ENCODE measurements at regions of chr20 and their contacts with region 1.

Region 1: GRCh38 chr20:34312544-34313217 is 9.5 kb upstream of the AHCY start:
- DNase-seq: peak; percentile 80
- H3K4me3 Mint-ChIP-seq: no peak overlapping the region
- H3K27ac Mint-ChIP-seq: no peak overlapping the region
- H3K4me1 Mint-ChIP-seq: no peaks in the 10 kb centered on the region
- H3K27me3 Mint-ChIP-seq: peaks cover 27% of the 10 kb centered on the region

Region 2: DNA sequence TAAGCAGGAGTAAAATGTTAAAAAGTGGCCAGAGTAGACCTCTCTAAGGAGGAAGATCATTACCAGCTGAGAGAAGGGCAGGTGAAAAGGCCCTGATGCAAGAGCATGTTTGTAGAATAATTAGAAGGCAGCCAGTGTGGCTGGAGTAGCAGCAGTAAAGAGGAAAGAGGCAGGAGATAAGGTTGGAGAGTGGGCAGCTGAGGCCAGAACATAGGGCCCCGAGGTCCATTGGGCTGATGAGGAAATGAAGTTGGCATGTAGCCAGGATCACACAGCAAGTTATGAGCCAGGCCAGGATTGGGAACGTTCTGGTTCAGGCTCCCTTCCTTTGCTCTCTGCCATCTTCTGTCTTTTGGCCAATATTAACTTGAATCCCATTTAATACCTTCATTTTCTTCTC is 267.4 kb before region 1 on chr20:
- intact Hi-C with region 1: no loop called
- DNase-seq: no peak
- H3K4me3 Mint-ChIP-seq: no peak overlapping the region
- H3K27ac Mint-ChIP-seq: no peak overlapping the region
- H3K4me1 Mint-ChIP-seq: peaks cover 22% of the 10 kb centered on the region
- H3K27me3 Mint-ChIP-seq: no peaks in the 10 kb centered on the region

Region 3: GRCh38 chr20:34415079-34415478 is 102.4 kb after region 1 on chr20:
- intact Hi-C with region 1: loop called (anchors 2 kb)
- DNase-seq: no peak
- H3K4me3 Mint-ChIP-seq: no peak overlapping the region
- H3K27ac Mint-ChIP-seq: peak overlapping the region; percentile 74
- H3K4me1 Mint-ChIP-seq: peaks cover 20% of the 10 kb centered on the region
- H3K27me3 Mint-ChIP-seq: no peaks in the 10 kb centered on the region

Region 4: GRCh38 chr20:34475979-34476736 is 163.5 kb after region 1 on chr20:
- intact Hi-C with region 1: loop called (anchors 1 kb)
- DNase-seq: no peak
- H3K4me3 Mint-ChIP-seq: no peak overlapping the region
- H3K27ac Mint-ChIP-seq: no peak overlapping the region
- H3K4me1 Mint-ChIP-seq: peaks cover 7% of the 10 kb centered on the region
- H3K27me3 Mint-ChIP-seq: no peaks in the 10 kb centered on the region

Region 5: DNA sequence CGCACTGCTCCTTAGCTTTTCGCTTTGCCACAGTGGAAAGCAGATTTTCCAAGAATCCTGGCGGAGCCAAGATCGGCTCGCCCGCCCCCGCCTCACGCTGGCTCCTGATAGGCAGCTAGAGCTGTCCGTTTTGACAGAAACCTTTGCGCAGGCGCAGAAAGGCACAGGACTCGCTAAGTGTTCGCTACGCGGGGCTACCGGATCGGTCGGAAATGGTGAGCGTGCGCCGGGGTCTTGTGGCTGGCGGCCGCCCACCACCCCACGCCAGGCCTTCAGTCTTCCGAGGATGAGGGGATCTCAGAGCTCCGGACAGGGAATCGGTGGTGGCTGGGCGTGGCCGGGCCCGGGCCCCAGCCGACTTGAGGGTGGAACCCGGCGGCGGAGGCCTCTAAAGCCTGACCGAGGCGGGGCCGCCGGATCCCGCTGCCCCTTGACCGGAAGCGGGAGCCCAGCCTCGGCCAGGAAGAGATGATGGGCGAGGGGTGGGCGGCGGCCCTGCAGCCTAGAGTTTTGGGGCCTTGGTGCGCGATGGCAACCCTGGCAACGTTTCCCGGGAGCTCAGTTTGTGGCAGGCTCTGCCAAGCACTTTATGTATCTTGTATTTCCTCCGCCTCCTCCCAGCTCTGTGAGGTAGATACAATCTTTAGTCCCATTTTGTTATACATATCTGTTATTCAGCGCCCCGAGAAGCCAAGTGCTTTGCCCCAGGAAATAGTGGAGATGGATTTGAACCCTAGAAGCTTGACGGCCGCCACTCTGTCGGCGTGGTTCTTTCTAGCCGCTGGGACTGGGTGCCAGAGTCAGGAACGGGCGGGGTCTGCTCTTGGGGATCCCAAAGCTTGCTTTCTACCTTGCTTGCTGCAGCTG is 203.8 kb after region 1 on chr20 and contains the start of gene DYNLRB1:
- intact Hi-C with region 1: loop called (anchors 1 kb)
- DNase-seq: peak; percentile 93
- H3K4me3 Mint-ChIP-seq: peak within 1 kb of the TSS; percentile 95
- H3K27ac Mint-ChIP-seq: peak within 1 kb of the TSS; percentile 96
- H3K4me1 Mint-ChIP-seq: peaks cover 35% of the 10 kb centered on the region
- H3K27me3 Mint-ChIP-seq: no peaks in the 10 kb centered on the region
- total RNA-seq, gene DYNLRB1: 92.0 and 104 TPM in 2 replicates

Region 6: GRCh38 chr20:34522969-34523871 is 210.5 kb after region 1 on chr20:
- intact Hi-C with region 1: loop called (anchors 1 kb)
- DNase-seq: peak; percentile 26
- H3K4me3 Mint-ChIP-seq: no peak overlapping the region
- H3K27ac Mint-ChIP-seq: no peak overlapping the region
- H3K4me1 Mint-ChIP-seq: peaks cover 15% of the 10 kb centered on the region
- H3K27me3 Mint-ChIP-seq: no peaks in the 10 kb centered on the region

Region 7: GRCh38 chr20:34768096-34768495 is 455.4 kb after region 1 on chr20:
- intact Hi-C with region 1: loop called (anchors 1 kb)
- DNase-seq: no peak
- H3K4me3 Mint-ChIP-seq: no peak overlapping the region
- H3K27ac Mint-ChIP-seq: no peak overlapping the region
- H3K4me1 Mint-ChIP-seq: no peaks in the 10 kb centered on the region
- H3K27me3 Mint-ChIP-seq: no peaks in the 10 kb centered on the region